K562 (cell line): ENCODE measurements at regions of chr10 and their contacts with region 1.

Region 1: DNA sequence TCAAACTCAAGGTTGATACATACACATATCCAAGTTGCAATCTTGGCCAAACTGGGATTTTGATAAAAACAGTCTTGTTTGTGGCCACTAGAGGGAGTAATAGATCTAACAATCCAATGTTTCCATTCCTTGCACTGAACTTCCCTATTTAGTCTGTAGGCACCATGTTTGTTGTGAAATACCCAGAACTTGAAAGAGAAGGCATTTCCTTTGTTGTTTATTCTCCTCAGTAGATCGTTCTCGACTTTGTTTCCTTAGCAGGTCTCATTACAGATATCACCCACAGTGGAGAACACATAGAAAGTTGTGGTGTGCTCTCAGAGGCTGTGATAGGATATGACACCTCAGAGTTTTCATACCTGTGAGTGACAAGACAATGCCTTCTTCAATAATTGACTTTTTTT is 70.3 kb upstream of the MXI1 start:
- DNase-seq: peak; percentile 40 to 54 (median 42)
- ATAC-seq: peak; percentile 86
- H3K4me3 ChIP-seq: no peak overlapping the region
- H3K27ac ChIP-seq: 0 out of 3 replicates have a peak overlapping the region, but pooled peaks have one; percentile 21
- H3K4me1 ChIP-seq: peaks cover 0 to 2% of the 10 kb centered on the region in 2 experiments; a peak in 2 of 5 replicates
- H3K27me3 ChIP-seq: no peaks in the 10 kb centered on the region
- CTCF ChIP-seq: peak; percentile 68 to 79 (median 71)
- EP300 ChIP-seq: no peak
- POLR2A ChIP-seq: no peak
- RAD21 ChIP-seq: peak; percentile 85 to 88

Region 2: DNA sequence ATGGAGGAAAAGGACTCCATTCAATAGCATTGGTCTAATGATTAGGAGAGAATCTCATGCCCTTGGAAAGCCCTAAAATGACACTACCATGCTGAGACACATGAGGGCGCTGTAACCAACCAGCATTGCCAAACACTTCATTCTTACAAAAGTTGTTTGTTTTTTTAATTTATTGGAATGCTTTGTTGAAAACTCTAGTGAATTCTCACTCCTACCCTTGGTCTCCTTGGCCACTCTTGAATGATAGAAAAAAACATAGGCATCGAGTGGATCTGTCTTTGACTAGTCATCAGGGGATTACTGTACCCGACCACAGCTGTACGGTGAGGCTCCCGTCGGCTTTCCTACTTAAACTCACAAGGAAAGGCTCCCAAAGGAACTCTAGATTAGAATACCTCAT is 158.7 kb before region 1 on chr10:
- CTCF ChIA-PET with region 1: no interaction called
- POLR2A ChIA-PET with region 1: no interaction called
- in situ Hi-C with region 1: no loop called
- intact Hi-C with region 1: loop called (anchors 5 kb)
- DNase-seq: peak; percentile 44 to 74 (median 46)
- ATAC-seq: peak; percentile 68
- H3K4me3 ChIP-seq: no peak overlapping the region
- H3K27ac ChIP-seq: peak overlapping the region; percentile 55; the same call in 2 of the 3 replicates
- H3K4me1 ChIP-seq: peaks cover 8 to 21% of the 10 kb centered on the region in 2 experiments; a peak in 4 of 5 replicates
- H3K27me3 ChIP-seq: no peaks in the 10 kb centered on the region
- CTCF ChIP-seq: peak; percentile 63 to 81 (median 77)
- EP300 ChIP-seq: no peak
- POLR2A ChIP-seq: no peak
- RAD21 ChIP-seq: peak; percentile 50 to 74; a peak in 3 of 4 replicates

Region 3: GRCh38 chr10:110225756-110226542 is 88.8 kb after region 1 on chr10:
- CTCF ChIA-PET with region 1: interaction called, 16 read pairs
- POLR2A ChIA-PET with region 1: no interaction called
- in situ Hi-C with region 1: no loop called
- intact Hi-C with region 1: loop called (anchors 5 kb)
- DNase-seq: peak; percentile 75 to 91 (median 81)
- ATAC-seq: peak; percentile 75
- H3K4me3 ChIP-seq: peak overlapping the region; percentile 80
- H3K27ac ChIP-seq: peak overlapping the region; percentile 90
- H3K4me1 ChIP-seq: peaks cover 31% of the 10 kb centered on the region in 2 experiments; a peak in 4 of 5 replicates
- H3K27me3 ChIP-seq: no peaks in the 10 kb centered on the region
- CTCF ChIP-seq: peak; percentile 52 to 71 (median 54); a peak in 5 of 6 replicates
- EP300 ChIP-seq: no peak
- POLR2A ChIP-seq: peak; percentile 67
- RAD21 ChIP-seq: peak; percentile 36 to 61

Region 4: GRCh38 chr10:110279407-110279986 is 142.4 kb after region 1 on chr10:
- CTCF ChIA-PET with region 1: interaction called, 40 read pairs
- POLR2A ChIA-PET with region 1: interaction called, 6 read pairs
- in situ Hi-C with region 1: loop called (anchors 5 kb)
- intact Hi-C with region 1: loop called (anchors 1 kb)
- DNase-seq: peak; percentile 12 to 69 (median 20)
- ATAC-seq: peak; percentile 83
- H3K4me3 ChIP-seq: no peak overlapping the region
- H3K27ac ChIP-seq: no peak overlapping the region
- H3K4me1 ChIP-seq: peaks cover 0 to 10% of the 10 kb centered on the region in 2 experiments; a peak in 3 of 5 replicates
- H3K27me3 ChIP-seq: no peaks in the 10 kb centered on the region
- CTCF ChIP-seq: peak; percentile 50 to 76 (median 66)
- EP300 ChIP-seq: no peak
- POLR2A ChIP-seq: no peak
- RAD21 ChIP-seq: peak; percentile 85 to 92

Region 5: DNA sequence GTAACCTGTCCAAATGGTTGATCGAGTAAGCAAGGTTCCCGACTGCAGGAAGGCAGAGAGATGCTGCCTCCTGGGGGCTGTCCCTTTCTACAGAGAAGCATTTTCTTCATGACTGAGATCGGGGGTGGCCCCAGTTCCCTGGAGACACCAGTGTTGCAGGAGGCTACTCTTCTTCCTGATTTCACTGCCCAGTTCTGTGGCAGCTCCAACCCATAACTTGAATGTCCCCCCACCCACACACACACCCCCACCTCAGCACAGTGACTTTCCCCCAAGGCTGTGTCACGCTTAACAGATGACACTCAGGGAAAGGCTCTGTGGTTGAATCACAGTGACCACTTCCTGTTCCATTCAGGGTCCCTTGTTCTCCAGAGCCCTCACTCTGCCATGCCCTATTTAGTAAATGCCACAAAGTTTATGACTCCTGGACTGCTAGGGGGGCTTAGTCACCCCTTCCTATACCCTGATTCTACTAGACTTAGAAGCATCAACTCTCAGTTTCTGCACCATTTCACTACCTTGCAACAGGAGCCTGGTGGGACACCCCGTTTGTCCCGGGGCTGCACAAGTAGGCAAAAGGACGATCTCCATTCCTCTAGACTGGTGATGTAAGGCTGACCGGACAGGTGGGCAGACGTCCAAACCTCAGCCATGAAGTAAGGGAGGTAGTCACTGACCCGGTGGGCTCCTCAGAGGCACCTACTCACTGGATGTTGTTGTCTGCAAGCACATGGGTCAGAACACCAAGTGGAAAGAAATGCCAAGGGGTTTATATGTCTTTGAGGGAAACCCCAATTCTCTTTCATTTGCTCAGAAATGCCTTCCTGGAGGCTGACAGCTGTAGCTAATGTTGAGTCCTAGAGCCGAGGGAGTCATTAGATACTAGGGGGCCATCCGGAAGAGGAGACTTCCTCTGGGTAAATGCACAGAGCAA is 399.1 kb after region 1 on chr10:
- CTCF ChIA-PET with region 1: no interaction called
- POLR2A ChIA-PET with region 1: no interaction called
- in situ Hi-C with region 1: loop called (anchors 25 kb)
- intact Hi-C with region 1: no loop called
- DNase-seq: peak in 2 of 4 experiments; percentile 28 to 54
- ATAC-seq: peak; percentile 92
- H3K4me3 ChIP-seq: no peak overlapping the region
- H3K27ac ChIP-seq: no peak overlapping the region
- H3K4me1 ChIP-seq: peaks cover 0 to 4% of the 10 kb centered on the region in 2 experiments; a peak in 2 of 5 replicates
- H3K27me3 ChIP-seq: no peaks in the 10 kb centered on the region
- CTCF ChIP-seq: peak; percentile 60 to 75 (median 62)
- EP300 ChIP-seq: no peak
- POLR2A ChIP-seq: no peak
- RAD21 ChIP-seq: peak; percentile 77 to 89